Activated naive CD4-positive, alpha-beta T cell treated with anti-CD3 and anti-CD28 coated beads for 36 hours (primary cell): ENCODE measurements at regions of chr11 and their contacts with region 1.

Region 1: DNA sequence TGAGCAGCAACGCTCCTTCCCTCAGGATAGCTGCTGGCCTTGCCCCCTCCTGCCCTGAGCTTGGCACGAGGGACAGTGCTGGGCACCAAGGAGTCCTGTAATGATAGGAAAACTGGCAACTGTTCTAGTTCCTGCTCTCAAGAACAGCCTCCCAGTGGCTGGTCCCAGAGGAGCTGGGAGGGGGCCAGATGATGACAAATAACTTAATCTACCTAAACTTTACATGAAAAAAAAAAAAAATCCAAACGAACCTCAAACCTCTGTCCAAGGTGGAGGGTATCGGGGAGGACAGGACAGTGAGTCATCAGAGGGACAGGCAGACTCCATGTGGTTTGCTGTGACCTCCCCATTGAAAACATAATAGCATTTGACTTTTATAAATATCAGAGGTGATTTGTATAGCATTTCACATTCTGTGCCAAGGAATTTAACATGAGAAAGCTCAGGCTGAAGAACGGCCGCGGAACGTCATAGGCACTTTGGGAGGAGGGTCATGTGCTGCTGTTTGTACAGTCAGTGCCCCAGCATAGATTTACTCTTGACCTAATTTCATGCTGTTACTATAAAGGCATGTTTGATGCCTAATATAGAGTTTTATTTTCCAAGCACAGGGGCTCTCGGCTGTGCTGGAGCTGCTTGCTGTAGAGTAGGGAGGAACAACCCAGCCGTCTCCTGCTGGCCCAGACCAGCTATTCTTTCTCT is 98.2 kb upstream of the NNMT start:
- DNase-seq: no peak
- H3K4me3 Mint-ChIP-seq: no peak overlapping the region
- H3K27ac Mint-ChIP-seq: no peak overlapping the region
- H3K4me1 Mint-ChIP-seq: peaks cover 8% of the 10 kb centered on the region
- H3K27me3 Mint-ChIP-seq: no peaks in the 10 kb centered on the region

Region 2: GRCh38 chr11:113896156-113896879 is 301.6 kb before region 1 on chr11:
- CTCF ChIA-PET with region 1: no interaction called
- intact Hi-C with region 1: loop called (anchors 5 kb)
- DNase-seq: peak; percentile 54
- H3K4me3 Mint-ChIP-seq: no peak overlapping the region
- H3K27ac Mint-ChIP-seq: no peak overlapping the region
- H3K4me1 Mint-ChIP-seq: no peaks in the 10 kb centered on the region
- H3K27me3 Mint-ChIP-seq: no peaks in the 10 kb centered on the region

Region 3: GRCh38 chr11:114036156-114036811 is 161.7 kb before region 1 on chr11:
- CTCF ChIA-PET with region 1: interaction called, 5 read pairs
- intact Hi-C with region 1: loop called (anchors 1 kb)
- DNase-seq: peak; percentile 67
- H3K4me3 Mint-ChIP-seq: no peak overlapping the region
- H3K27ac Mint-ChIP-seq: no peak overlapping the region
- H3K4me1 Mint-ChIP-seq: peaks cover 2% of the 10 kb centered on the region
- H3K27me3 Mint-ChIP-seq: no peaks in the 10 kb centered on the region

Region 4: GRCh38 chr11:114511538-114511937 is 313.6 kb after region 1 on chr11:
- CTCF ChIA-PET with region 1: no interaction called
- intact Hi-C with region 1: no loop called
- DNase-seq: no peak
- H3K4me3 Mint-ChIP-seq: no peak overlapping the region
- H3K27ac Mint-ChIP-seq: no peak overlapping the region
- H3K4me1 Mint-ChIP-seq: no peaks in the 10 kb centered on the region
- H3K27me3 Mint-ChIP-seq: peaks cover 1% of the 10 kb centered on the region